Sigmoid colon (tissue), 7 donors: ENCODE measurements at regions of chrX and their contacts with region 1.

Region 1: DNA sequence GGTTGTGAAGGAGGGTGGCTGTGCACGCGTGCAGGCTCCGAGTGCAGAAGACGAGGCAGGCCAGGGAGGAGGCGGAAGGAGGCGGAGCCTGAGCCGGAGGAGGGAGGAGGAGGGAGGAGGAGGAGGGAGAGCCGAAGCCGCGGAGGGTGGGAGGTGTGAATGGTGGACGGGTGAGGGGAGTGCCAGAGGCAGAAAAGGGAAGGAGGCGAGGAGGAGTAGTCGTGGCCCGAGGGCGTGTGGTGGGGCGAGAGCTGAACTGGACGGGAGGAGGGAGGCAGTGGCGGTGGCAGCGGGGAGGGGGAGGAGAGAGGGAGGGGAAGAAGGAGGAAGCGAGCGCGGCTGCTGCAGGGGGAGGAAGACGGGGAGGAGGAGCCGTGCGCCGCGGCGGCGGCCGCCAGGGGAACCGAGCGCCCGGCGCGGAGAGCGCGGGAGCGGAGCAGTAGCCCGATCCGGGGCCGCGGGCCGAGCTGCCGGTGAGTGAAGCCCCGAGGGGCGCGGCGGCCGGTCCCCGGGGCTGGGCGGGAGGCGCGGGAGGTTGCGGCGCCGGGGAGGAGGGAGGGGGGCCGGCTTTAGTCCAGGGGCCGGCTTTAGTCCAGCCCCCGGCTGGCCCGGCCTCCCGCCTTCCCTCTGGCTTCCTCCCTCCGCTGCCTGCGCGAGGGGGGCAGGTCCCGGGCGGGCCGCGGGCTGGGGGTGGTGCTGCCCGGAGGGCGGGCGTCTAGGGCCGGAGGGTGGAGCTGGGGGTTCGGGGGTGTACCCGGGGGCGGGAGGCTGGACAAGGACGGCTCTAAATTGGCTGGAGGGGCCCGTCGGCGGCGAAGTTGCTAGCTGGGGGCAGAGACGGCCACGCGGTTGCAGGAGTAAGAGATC is at the start of gene TMEM164:
- DNase-seq: peak; percentile 91
- H3K4me3 ChIP-seq: peak within 1 kb of the TSS; percentile 50 to 69 (median 62)
- H3K27ac ChIP-seq: peak within 1 kb of the TSS; percentile 81 to 94 (median 88)
- H3K4me1 ChIP-seq: peaks cover 0 to 24% (median 18%) of the 10 kb centered on the region in 4 donors
- H3K27me3 ChIP-seq: peaks cover 0 to 4% (median 0%) of the 10 kb centered on the region in 3 donors
- CTCF ChIP-seq: peak in 1 of 4 experiments; percentile 21
- EP300 ChIP-seq: no peak
- POLR2A ChIP-seq: peak in 1 of 2 donors; percentile 25
- total RNA-seq, gene TMEM164: 6.4 to 15.0 (median 10.4) TPM

Region 2: DNA sequence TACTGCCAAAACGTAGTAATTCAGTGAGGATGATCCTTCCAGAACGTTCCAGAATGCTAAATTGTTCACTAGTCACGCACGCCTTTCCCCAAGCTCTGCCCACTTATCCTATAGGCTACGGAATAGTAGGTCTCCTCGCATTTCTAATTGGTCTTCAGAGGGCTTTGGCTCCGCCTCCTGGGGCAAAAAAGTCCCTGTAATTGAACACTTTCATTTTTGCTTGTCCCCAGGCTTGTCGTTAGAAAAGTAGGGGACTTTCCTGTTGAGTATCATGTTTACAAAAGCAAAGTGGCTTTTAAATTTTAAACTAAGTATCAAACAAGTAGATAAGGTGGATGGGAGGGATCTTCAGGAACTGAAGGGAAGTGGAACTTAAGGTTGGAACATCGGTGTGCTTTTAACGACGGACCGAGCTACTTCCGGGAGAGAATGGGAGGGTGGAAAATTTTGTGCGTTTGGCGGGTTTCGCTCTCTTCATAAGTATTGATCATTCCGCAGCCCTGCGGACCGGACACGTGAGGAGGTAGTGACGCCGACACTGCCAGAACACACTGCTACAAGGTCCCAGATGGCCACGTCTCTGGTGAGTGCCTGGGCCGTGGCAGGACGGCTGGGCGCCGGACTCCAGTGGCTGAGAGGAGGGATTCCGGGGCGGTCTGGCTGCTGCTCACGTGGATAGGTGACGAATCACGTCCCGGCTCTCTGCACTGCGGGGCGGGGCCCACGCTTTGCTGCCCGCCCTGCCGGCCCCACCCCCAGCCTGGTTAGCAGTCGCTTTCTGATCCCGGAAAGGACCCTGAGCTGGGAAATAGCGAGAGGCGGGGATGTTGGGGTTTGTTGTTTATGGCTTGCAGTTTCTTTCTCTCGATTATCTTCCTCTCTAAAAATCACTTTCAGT is 465.8 kb before region 1 on chrX and contains the start of gene NXT2:
- intact Hi-C with region 1: loop called (anchors 5 kb)
- DNase-seq: peak; percentile 95
- H3K4me3 ChIP-seq: peak within 1 kb of the TSS; percentile 39 to 56 (median 56)
- H3K27ac ChIP-seq: peak within 1 kb of the TSS; percentile 84 to 89 (median 86)
- H3K4me1 ChIP-seq: no peaks in the 10 kb centered on the region
- H3K27me3 ChIP-seq: no peaks in the 10 kb centered on the region
- CTCF ChIP-seq: no peak
- EP300 ChIP-seq: no peak
- POLR2A ChIP-seq: peak; percentile 34 to 61
- total RNA-seq, gene NXT2: 2.4 to 3.6 (median 3.4) TPM

Region 3: GRCh38 chrX:109890895-109891502 is 111.5 kb before region 1 on chrX:
- intact Hi-C with region 1: no loop called
- DNase-seq: peak; percentile 70
- H3K4me3 ChIP-seq: no peak overlapping the region
- H3K27ac ChIP-seq: no peak overlapping the region
- H3K4me1 ChIP-seq: no peaks in the 10 kb centered on the region
- H3K27me3 ChIP-seq: no peaks in the 10 kb centered on the region
- CTCF ChIP-seq: peak; percentile 22 to 63 (median 36)
- EP300 ChIP-seq: no peak
- POLR2A ChIP-seq: no peak

Region 4: GRCh38 chrX:110146521-110146920 is 144.0 kb after region 1 on chrX:
- intact Hi-C with region 1: loop called (anchors 5 kb)
- DNase-seq: no peak
- H3K4me3 ChIP-seq: no peak overlapping the region
- H3K27ac ChIP-seq: no peak overlapping the region
- H3K4me1 ChIP-seq: peaks cover 0 to 16% (median 0%) of the 10 kb centered on the region in 4 donors
- H3K27me3 ChIP-seq: no peaks in the 10 kb centered on the region
- CTCF ChIP-seq: peak; percentile 24 to 50 (median 33)
- EP300 ChIP-seq: no peak
- POLR2A ChIP-seq: no peak